B cell (primary cell): ENCODE measurements at regions of chr14 and their contacts with region 1.

Region 1: GRCh38 chr14:105861985-105862465 is 335.6 kb downstream of the TMEM121 start:
- DNase-seq: peak; percentile 93
- ATAC-seq: peak; percentile 26
- H3K4me3 ChIP-seq: peak overlapping the region; percentile 99 to 100 (median 99)
- H3K4me3 Mint-ChIP-seq: peak overlapping the region; percentile 98
- H3K27ac ChIP-seq: peak overlapping the region; percentile 86 to 94
- H3K27ac Mint-ChIP-seq: peak overlapping the region; percentile 98
- H3K4me1 ChIP-seq: peaks cover 0 to 4% of the 10 kb centered on the region in 2 donors
- H3K4me1 Mint-ChIP-seq: no peaks in the 10 kb centered on the region
- H3K27me3 ChIP-seq: no peaks in the 10 kb centered on the region
- H3K27me3 Mint-ChIP-seq: no peaks in the 10 kb centered on the region
- CTCF ChIP-seq: no peak

Region 2: DNA sequence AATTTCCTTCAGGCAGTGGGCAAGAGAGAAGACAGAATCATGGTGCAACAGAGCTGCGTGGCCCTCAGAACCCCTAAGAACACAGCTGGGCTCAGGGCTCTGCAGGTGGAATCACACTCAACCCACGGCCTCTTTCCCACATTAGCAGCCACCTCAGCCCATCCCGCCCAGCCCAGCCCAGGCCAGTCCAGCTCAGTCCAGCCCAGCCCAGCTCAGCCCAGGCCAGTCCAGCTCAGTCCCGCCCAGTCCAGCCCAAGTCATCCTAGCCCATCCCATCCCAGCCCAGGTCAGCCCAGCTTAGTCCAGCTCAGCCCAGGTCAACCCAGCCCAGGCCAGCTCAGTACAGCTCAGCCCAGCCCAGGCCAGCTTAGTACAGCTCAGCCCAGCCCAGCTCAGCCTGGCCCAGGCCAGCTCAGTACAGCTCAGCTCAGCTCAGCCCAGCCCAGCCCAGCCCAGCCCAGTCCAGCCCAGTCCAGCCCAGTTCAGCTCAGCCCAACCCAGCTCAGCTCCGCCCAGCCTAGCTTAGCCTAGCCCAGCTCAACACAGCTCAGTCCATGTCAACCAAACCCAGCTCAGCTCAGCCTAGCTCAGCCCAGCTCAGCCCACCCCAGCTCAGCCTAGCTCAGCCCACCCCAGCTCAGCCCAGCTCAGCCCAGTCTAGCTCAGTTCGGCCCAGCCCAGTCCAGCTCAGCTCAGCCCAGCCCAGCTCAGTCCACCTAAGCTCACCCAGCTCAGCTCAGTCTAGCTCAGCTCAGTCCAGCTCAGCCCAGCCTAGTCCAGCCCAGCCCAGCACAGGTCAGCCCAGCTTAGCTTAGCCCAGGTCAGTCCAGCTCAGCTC is 152.5 kb before region 1 on chr14:
- CTCF ChIA-PET with region 1: interaction called, 10 read pairs
- POLR2A ChIA-PET with region 1: interaction called, 97 read pairs
- intact Hi-C with region 1: loop called (anchors 1 kb)
- DNase-seq: peak; percentile 22
- ATAC-seq: no peak
- H3K4me3 ChIP-seq: peak overlapping the region in 4 of 5 experiments; percentile 45 to 61 (median 52)
- H3K4me3 Mint-ChIP-seq: peak overlapping the region; percentile 82
- H3K27ac ChIP-seq: peak overlapping the region; percentile 80 to 90
- H3K27ac Mint-ChIP-seq: peak overlapping the region; percentile 88
- H3K4me1 ChIP-seq: peaks cover 31 to 69% of the 10 kb centered on the region in 2 donors
- H3K4me1 Mint-ChIP-seq: peaks cover 45% of the 10 kb centered on the region
- H3K27me3 ChIP-seq: no peaks in the 10 kb centered on the region
- H3K27me3 Mint-ChIP-seq: no peaks in the 10 kb centered on the region
- CTCF ChIP-seq: no peak

Region 3: DNA sequence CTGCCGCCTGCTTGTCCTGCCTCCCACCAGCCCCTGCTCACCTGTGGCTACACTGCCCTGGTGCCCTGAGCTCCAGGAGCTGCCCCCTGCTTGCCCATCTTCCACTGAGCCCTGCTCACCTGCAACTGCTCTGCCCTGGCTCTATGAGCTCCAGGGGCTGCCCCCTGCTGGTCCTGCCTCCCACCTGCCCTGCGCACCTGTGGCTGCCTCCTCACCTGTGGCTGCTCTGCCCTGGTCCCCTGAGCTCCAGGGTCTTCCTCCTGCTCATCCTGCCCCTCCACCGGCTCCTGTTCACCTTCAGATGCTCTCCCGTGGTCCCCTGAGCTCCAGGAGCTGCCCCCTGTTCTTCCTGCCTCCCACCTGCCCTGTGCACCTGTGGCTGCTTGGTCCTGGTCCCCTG is 88.0 kb before region 1 on chr14:
- CTCF ChIA-PET with region 1: no interaction called
- POLR2A ChIA-PET with region 1: interaction called, 29 read pairs
- intact Hi-C with region 1: no loop called
- DNase-seq: peak; percentile 42
- ATAC-seq: no peak
- H3K4me3 ChIP-seq: peak overlapping the region in 4 of 5 experiments; percentile 47 to 74 (median 62)
- H3K4me3 Mint-ChIP-seq: peak overlapping the region; percentile 97
- H3K27ac ChIP-seq: peak overlapping the region; percentile 54 to 65
- H3K27ac Mint-ChIP-seq: peak overlapping the region; percentile 98
- H3K4me1 ChIP-seq: peaks cover 26 to 43% of the 10 kb centered on the region in 2 donors
- H3K4me1 Mint-ChIP-seq: peaks cover 60% of the 10 kb centered on the region
- H3K27me3 ChIP-seq: no peaks in the 10 kb centered on the region
- H3K27me3 Mint-ChIP-seq: no peaks in the 10 kb centered on the region
- CTCF ChIP-seq: no peak

Region 4: GRCh38 chr14:105841022-105842009 is 20.7 kb before region 1 on chr14:
- CTCF ChIA-PET with region 1: no interaction called
- POLR2A ChIA-PET with region 1: interaction called, 12 read pairs
- intact Hi-C with region 1: no loop called
- DNase-seq: no peak
- ATAC-seq: no peak
- H3K4me3 ChIP-seq: no peak overlapping the region
- H3K4me3 Mint-ChIP-seq: no peak overlapping the region
- H3K27ac ChIP-seq: peak overlapping the region in 1 of 2 donors; percentile 55
- H3K27ac Mint-ChIP-seq: peak overlapping the region; percentile 81
- H3K4me1 ChIP-seq: peaks cover 0 to 8% of the 10 kb centered on the region in 2 donors
- H3K4me1 Mint-ChIP-seq: peaks cover 17% of the 10 kb centered on the region
- H3K27me3 ChIP-seq: no peaks in the 10 kb centered on the region
- H3K27me3 Mint-ChIP-seq: no peaks in the 10 kb centered on the region
- CTCF ChIP-seq: no peak

Region 5: GRCh38 chr14:105894978-105895881 is 33.2 kb after region 1 on chr14:
- CTCF ChIA-PET with region 1: interaction called, 3 read pairs
- POLR2A ChIA-PET with region 1: interaction called, 5 read pairs
- intact Hi-C with region 1: loop called (anchors 5 kb)
- DNase-seq: no peak
- ATAC-seq: no peak
- H3K4me3 ChIP-seq: peak overlapping the region in 3 of 5 experiments; percentile 13 to 38 (median 23)
- H3K4me3 Mint-ChIP-seq: peak overlapping the region; percentile 71
- H3K27ac ChIP-seq: peak overlapping the region in 1 of 2 donors; percentile 18
- H3K27ac Mint-ChIP-seq: peak overlapping the region; percentile 78
- H3K4me1 ChIP-seq: no peaks in the 10 kb centered on the region
- H3K4me1 Mint-ChIP-seq: peaks cover 10% of the 10 kb centered on the region
- H3K27me3 ChIP-seq: no peaks in the 10 kb centered on the region
- H3K27me3 Mint-ChIP-seq: no peaks in the 10 kb centered on the region
- CTCF ChIP-seq: no peak

Region 6: DNA sequence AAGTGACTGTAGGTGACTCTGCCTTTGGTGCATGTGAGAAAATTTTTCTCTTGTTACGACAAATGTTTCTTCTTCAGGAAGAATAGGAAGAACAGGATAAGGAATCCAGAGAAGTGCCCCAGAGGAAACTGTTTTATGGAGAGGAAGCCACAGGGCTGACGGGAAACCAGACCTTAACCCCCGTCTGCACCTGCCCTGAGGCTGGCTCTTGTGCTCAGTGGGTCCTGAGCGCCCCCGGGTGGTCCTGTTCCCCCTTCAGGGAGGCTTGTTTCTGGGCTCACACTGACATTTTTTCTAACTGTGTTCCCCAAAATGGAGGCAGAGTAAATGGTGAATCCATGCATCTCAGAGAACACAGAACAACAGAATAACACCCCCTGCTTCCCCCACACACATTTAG is 356.1 kb after region 1 on chr14:
- CTCF ChIA-PET with region 1: no interaction called
- POLR2A ChIA-PET with region 1: no interaction called
- intact Hi-C with region 1: no loop called
- DNase-seq: no peak
- ATAC-seq: no peak
- H3K4me3 ChIP-seq: no peak overlapping the region
- H3K4me3 Mint-ChIP-seq: no peak overlapping the region
- H3K27ac ChIP-seq: no peak overlapping the region
- H3K27ac Mint-ChIP-seq: no peak overlapping the region
- H3K4me1 ChIP-seq: no peaks in the 10 kb centered on the region
- H3K4me1 Mint-ChIP-seq: no peaks in the 10 kb centered on the region
- H3K27me3 ChIP-seq: no peaks in the 10 kb centered on the region
- H3K27me3 Mint-ChIP-seq: peaks cover 3% of the 10 kb centered on the region
- CTCF ChIP-seq: no peak